ENCODE measurements at regions of chr7 and their contacts with region 1.

Region 1: GRCh38 chr7:2764621-2765020 is 76.6 kb downstream of the AMZ1 start:
- DNase-seq: no peak

Region 2: GRCh38 chr7:2688409-2689331 is 76.0 kb before region 1 on chr7:
- intact Hi-C with region 1: no loop called
- DNase-seq: no peak

Region 3: DNA sequence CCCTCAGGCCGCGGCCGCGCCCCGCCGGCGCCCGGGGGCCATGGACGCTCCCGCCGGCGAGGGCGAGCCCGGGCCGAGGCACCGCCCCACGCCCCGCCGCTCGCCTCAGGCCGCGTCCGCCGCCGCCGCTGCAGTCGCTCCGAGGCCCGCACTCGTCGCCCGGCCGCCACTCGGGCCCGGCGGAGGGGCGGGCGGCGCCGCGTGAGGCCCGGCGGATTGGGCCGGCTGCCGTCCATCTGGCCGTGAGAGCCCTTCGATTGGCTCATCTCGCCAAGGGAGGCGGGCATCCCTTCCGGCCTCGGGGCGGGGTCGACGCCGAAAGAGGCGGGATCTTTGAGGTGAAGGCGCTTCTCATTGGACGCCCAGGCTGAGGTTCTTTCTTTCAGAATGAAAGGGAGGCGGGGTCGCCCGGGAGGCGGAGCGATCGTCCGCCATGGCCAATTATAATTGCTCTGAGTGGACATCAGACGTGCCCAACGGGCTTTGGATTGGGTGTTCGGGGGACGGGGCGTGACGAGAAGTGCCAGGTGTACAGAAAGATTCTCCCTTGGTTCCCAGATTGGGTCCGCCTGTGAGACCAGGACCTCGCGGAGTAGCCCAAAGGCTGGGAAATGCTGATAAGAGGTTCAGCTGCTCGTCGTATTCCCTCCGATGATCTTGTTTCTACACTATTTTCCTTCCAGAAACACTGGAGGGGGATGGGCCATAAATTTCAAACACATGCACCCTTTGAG is 79.7 kb after region 1 on chr7 and contains the start of gene GNA12:
- intact Hi-C with region 1: loop called (anchors 2 kb)
- DNase-seq: peak; percentile 99
- total RNA-seq, gene GNA12: 33.7 TPM

Measured in cardiac septum (tissue), 1 donor.